Posterior cingulate gyrus (tissue), 11 donors: ENCODE measurements at regions of chr10 and their contacts with region 1.

Region 1: GRCh38 chr10:73263948-73264347 is 11.5 kb upstream of the MRPS16 start:
- DNase-seq: no peak

Region 2: GRCh38 chr10:73358331-73359279 is 94.7 kb after region 1 on chr10 and contains the start of gene CFAP70:
- intact Hi-C with region 1: loop called (anchors 10 kb)
- DNase-seq: peak; percentile 77 to 99 (median 88)

Region 3: DNA sequence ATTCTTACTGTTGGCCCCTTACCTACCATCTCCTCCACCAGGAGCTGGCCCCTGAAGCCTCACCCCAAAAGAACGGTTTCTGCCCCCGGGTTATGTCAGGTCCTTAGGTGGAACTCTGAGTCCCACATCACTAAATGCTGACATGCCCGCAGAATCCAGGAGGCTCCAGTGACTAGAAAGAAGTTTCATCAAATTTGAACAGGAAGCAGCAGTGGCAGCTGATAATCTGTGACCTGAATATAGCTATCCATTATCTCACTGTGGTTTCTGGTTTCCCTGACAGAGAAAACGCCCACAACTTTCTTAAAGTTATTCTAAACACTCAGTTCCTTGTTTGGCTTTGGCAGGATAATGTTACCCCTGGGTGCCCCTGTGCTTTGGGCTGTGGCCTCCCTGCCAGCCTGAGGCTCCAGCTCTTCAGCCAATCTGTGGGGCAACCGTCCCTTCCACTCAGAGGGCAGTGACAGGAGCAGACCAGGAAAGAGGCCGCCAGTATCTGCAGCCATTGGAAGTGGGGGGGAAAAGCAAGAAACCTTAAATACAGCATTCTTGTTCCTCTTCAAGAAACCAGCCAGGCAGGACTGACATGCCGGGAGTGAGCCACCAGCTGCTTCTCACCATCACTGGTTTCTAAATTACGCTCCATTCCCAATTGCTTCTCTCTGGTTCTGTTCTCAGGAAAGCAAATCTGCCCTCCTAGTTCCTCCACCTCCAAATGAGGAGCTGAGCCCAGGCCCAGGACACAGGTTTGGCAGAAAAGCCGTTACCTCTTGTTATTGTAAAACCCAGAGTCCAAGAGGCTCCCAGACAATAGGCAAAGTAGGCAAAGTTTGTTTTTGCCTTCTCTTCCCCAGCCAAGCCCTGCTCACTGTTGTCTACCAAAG is 692.8 kb after region 1 on chr10:
- intact Hi-C with region 1: no loop called
- DNase-seq: peak in 1 of 10 donors; percentile 52